ENCODE measurements at regions of chr2 and their contacts with region 1.

Region 1: DNA sequence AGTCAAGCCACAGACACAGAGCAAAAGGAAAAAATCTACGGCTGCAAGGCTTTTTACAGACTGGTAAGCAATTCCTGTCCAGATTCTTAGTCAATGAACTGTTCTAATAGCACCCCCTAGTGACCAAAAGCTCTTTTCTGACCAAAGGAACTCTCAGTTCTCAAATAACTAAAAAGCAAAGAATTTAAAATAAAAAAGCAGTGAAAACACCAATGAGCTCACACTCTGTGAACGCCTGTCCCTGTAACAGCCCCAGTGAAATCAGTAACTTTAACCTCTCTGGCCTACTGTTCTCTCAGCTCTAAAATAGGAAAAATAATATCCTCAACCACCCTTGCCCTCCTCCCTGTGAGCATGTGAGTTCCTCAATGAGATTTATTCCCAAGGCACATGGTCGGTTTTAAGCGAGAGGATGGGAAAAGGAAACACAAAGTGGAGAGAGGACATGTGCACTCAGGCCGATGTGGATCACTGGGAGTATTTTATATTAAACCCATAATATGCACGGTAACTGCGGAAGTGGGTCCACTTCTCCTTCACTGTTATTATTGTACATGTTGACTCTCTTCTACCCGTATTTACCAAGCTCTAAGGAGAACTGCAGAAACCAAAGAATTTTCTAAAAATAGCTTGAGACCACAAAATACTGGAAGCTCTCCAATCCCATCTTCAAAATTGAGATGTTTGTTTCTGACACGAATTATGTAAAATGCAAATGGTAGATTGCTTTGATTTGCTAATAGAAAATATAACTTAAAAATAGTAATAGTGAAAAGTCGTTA is 128.5 kb downstream of the STK39 start:
- DNase-seq: peak in 1 of 2 donors; percentile 45
- ATAC-seq: peak; percentile 43 to 74 (median 66)
- H3K4me3 ChIP-seq: peak overlapping the region in 1 of 10 donors; percentile 6
- H3K27ac ChIP-seq: peak overlapping the region in 4 of 10 donors; percentile 3 to 23 (median 12)
- H3K4me1 ChIP-seq: peaks cover 2 to 60% (median 16%) of the 10 kb centered on the region in 9 donors
- H3K27me3 ChIP-seq: no peaks in the 10 kb centered on the region
- CTCF ChIP-seq: peak; percentile 38 to 83 (median 73)

Region 2: GRCh38 chr2:166539340-166540162 is 1579.4 kb before region 1 on chr2:
- intact Hi-C with region 1: loop called in 6 of 10 experiments (anchors 5 to 10 kb)
- DNase-seq: peak in 1 of 2 donors; percentile 14
- ATAC-seq: peak; percentile 63 to 86 (median 73)
- H3K4me3 ChIP-seq: no peak overlapping the region
- H3K27ac ChIP-seq: no peak overlapping the region
- H3K4me1 ChIP-seq: peaks cover 0 to 4% (median 0%) of the 10 kb centered on the region in 9 donors
- H3K27me3 ChIP-seq: no peaks in the 10 kb centered on the region
- CTCF ChIP-seq: peak; percentile 51 to 86 (median 76)

Region 3: DNA sequence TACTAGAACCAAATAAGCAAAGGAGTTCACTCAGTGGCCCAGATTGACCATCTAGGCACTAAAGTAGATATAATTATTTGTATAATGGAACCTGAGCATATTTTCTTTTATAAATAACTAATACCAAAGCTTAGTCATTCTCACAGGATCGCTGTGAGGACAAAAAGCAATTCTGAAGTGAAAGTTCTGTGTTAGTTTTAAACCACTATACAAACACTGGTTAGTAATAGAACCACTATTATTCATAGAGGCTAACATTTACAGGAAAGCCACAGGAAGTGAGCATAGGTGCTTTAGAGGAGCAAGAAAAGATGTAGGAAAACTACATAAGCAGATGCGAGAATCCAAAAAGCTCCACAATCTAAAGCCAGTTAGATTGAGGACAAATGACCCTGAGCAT is 865.9 kb before region 1 on chr2:
- intact Hi-C with region 1: loop called in 1 of 10 experiments (anchors 5 kb)
- DNase-seq: no peak
- ATAC-seq: no peak
- H3K4me3 ChIP-seq: no peak overlapping the region
- H3K27ac ChIP-seq: no peak overlapping the region
- H3K4me1 ChIP-seq: no peaks in the 10 kb centered on the region
- H3K27me3 ChIP-seq: no peaks in the 10 kb centered on the region
- CTCF ChIP-seq: no peak

Region 4: GRCh38 chr2:167264380-167264779 is 854.5 kb before region 1 on chr2:
- intact Hi-C with region 1: loop called in 1 of 10 experiments (anchors 10 kb)
- DNase-seq: no peak
- ATAC-seq: peak in 2 of 8 donors; percentile 53 to 55
- H3K4me3 ChIP-seq: no peak overlapping the region
- H3K27ac ChIP-seq: no peak overlapping the region
- H3K4me1 ChIP-seq: peaks cover 0 to 4% (median 0%) of the 10 kb centered on the region in 9 donors
- H3K27me3 ChIP-seq: no peaks in the 10 kb centered on the region
- CTCF ChIP-seq: peak in 6 of 9 donors; percentile 18 to 38 (median 32)

Region 5: GRCh38 chr2:167964650-167965413 is 154.1 kb before region 1 on chr2:
- intact Hi-C with region 1: loop called in 7 of 10 experiments (anchors 2 to 10 kb)
- DNase-seq: no peak
- ATAC-seq: peak in 2 of 8 donors; percentile 24 to 52
- H3K4me3 ChIP-seq: no peak overlapping the region
- H3K27ac ChIP-seq: no peak overlapping the region
- H3K4me1 ChIP-seq: peaks cover 0 to 6% (median 0%) of the 10 kb centered on the region in 9 donors
- H3K27me3 ChIP-seq: no peaks in the 10 kb centered on the region
- CTCF ChIP-seq: peak in 5 of 9 donors; percentile 26 to 45 (median 29)

Region 6: GRCh38 chr2:168246483-168247340 is 127.8 kb after region 1 on chr2:
- intact Hi-C with region 1: loop called in 1 of 10 experiments (anchors 5 kb)
- DNase-seq: peak; percentile 52 to 80
- ATAC-seq: peak; percentile 57 to 89 (median 76)
- H3K4me3 ChIP-seq: peak overlapping the region; percentile 53 to 90 (median 82)
- H3K27ac ChIP-seq: peak overlapping the region; percentile 37 to 94 (median 88)
- H3K4me1 ChIP-seq: peaks cover 0 to 48% (median 36%) of the 10 kb centered on the region in 9 donors
- H3K27me3 ChIP-seq: peaks cover 0 to 6% (median 0%) of the 10 kb centered on the region in 7 donors
- CTCF ChIP-seq: peak in 6 of 9 donors; percentile 19 to 57 (median 52)

Region 7: DNA sequence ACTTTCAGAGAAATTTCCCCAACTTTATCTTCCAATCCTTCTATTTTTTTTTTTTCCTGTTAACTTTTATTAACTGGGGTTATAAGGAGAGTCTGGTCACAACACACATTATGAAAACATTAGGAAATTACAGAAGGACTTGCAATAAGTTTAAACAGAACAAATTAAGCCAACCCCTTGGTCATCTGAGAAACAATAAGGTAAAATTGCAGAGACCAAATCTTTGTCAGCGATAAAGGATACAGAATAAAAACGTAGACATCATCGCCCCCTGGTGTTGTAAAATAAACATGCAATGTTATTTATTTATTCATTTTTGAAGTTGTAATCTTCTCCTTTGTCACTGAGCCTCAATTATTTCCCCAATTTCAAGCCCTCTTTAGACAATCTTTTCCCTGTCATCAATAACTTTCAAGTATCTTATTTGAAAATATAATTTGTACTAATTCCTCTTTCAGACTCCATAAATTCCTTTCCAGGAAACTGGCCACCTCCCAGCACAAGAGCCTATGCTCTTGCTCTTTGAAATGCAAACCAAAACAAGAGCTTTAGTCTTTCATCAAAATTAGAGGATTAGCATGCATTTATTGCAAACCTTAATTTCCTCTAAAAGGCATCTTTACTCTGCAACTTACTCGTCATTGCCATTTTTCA is 801.7 kb after region 1 on chr2:
- intact Hi-C with region 1: loop called in 1 of 10 experiments (anchors 10 kb)
- DNase-seq: no peak
- ATAC-seq: no peak
- H3K4me3 ChIP-seq: no peak overlapping the region
- H3K27ac ChIP-seq: no peak overlapping the region
- H3K4me1 ChIP-seq: no peaks in the 10 kb centered on the region
- H3K27me3 ChIP-seq: peaks cover 0 to 14% (median 4%) of the 10 kb centered on the region in 7 donors
- CTCF ChIP-seq: peak; percentile 49 to 79 (median 70)